ENCODE measurements at regions of chr7 and their contacts with region 1.

Region 1: GRCh38 chr7:76047811-76048667 is at the starts of genes MDH2 and STYXL1:
- DNase-seq: peak; percentile 96
- H3K4me3 Mint-ChIP-seq: peak within 1 kb of the TSS; percentile 97
- H3K27ac Mint-ChIP-seq: peak within 1 kb of the TSS; percentile 99
- H3K4me1 Mint-ChIP-seq: peaks cover 27% of the 10 kb centered on the region
- H3K27me3 Mint-ChIP-seq: no peaks in the 10 kb centered on the region
- CTCF ChIP-seq: no peak
- total RNA-seq, gene MDH2: 278 and 328 TPM in 2 replicates
- total RNA-seq, gene STYXL1: 49.3 and 79.7 TPM in 2 replicates

Region 2: GRCh38 chr7:75762314-75762917 is 285.6 kb before region 1 on chr7:
- CTCF ChIA-PET with region 1: no interaction called
- POLR2A ChIA-PET with region 1: no interaction called
- intact Hi-C with region 1: no loop called
- DNase-seq: peak; percentile 69
- H3K4me3 Mint-ChIP-seq: no peak overlapping the region
- H3K27ac Mint-ChIP-seq: no peak overlapping the region
- H3K4me1 Mint-ChIP-seq: peaks cover 6% of the 10 kb centered on the region
- H3K27me3 Mint-ChIP-seq: no peaks in the 10 kb centered on the region
- CTCF ChIP-seq: peak; percentile 77

Region 3: GRCh38 chr7:75971961-75972763 is 75.9 kb before region 1 on chr7:
- CTCF ChIA-PET with region 1: no interaction called
- POLR2A ChIA-PET with region 1: no interaction called
- intact Hi-C with region 1: no loop called
- DNase-seq: no peak
- H3K4me3 Mint-ChIP-seq: no peak overlapping the region
- H3K27ac Mint-ChIP-seq: no peak overlapping the region
- H3K4me1 Mint-ChIP-seq: no peaks in the 10 kb centered on the region
- H3K27me3 Mint-ChIP-seq: no peaks in the 10 kb centered on the region
- CTCF ChIP-seq: no peak

Region 4: GRCh38 chr7:76063577-76063976 is 15.5 kb after region 1 on chr7:
- CTCF ChIA-PET with region 1: interaction called, 3 read pairs
- POLR2A ChIA-PET with region 1: interaction called, 14 read pairs
- intact Hi-C with region 1: no loop called
- DNase-seq: peak; percentile 79
- H3K4me3 Mint-ChIP-seq: no peak overlapping the region
- H3K27ac Mint-ChIP-seq: no peak overlapping the region
- H3K4me1 Mint-ChIP-seq: no peaks in the 10 kb centered on the region
- H3K27me3 Mint-ChIP-seq: no peaks in the 10 kb centered on the region
- CTCF ChIP-seq: no peak

Region 5: GRCh38 chr7:76069238-76069638 is 21.2 kb after region 1 on chr7:
- CTCF ChIA-PET with region 1: interaction called, 3 read pairs
- POLR2A ChIA-PET with region 1: interaction called, 14 read pairs
- intact Hi-C with region 1: no loop called
- DNase-seq: peak; percentile 97
- H3K4me3 Mint-ChIP-seq: no peak overlapping the region
- H3K27ac Mint-ChIP-seq: no peak overlapping the region
- H3K4me1 Mint-ChIP-seq: peaks cover 6% of the 10 kb centered on the region
- H3K27me3 Mint-ChIP-seq: no peaks in the 10 kb centered on the region
- CTCF ChIP-seq: peak; percentile 43

Region 6: GRCh38 chr7:76086070-76086469 is 38.0 kb after region 1 on chr7:
- CTCF ChIA-PET with region 1: no interaction called
- POLR2A ChIA-PET with region 1: interaction called, 15 read pairs
- intact Hi-C with region 1: no loop called
- DNase-seq: peak; percentile 76
- H3K4me3 Mint-ChIP-seq: no peak overlapping the region
- H3K27ac Mint-ChIP-seq: peak overlapping the region; percentile 80
- H3K4me1 Mint-ChIP-seq: peaks cover 25% of the 10 kb centered on the region
- H3K27me3 Mint-ChIP-seq: no peaks in the 10 kb centered on the region
- CTCF ChIP-seq: no peak

Region 7: GRCh38 chr7:76291343-76292212 is 243.5 kb after region 1 on chr7:
- CTCF ChIA-PET with region 1: no interaction called
- POLR2A ChIA-PET with region 1: interaction called, 11 read pairs
- intact Hi-C with region 1: no loop called
- DNase-seq: peak; percentile 99
- H3K4me3 Mint-ChIP-seq: peak overlapping the region; percentile 29
- H3K27ac Mint-ChIP-seq: peak overlapping the region; percentile 84
- H3K4me1 Mint-ChIP-seq: peaks cover 41% of the 10 kb centered on the region
- H3K27me3 Mint-ChIP-seq: no peaks in the 10 kb centered on the region
- CTCF ChIP-seq: peak; percentile 89

Measured in MCF 10A (cell line).